ENCODE measurements at regions of chr6 and their contacts with region 1.

Region 1: DNA sequence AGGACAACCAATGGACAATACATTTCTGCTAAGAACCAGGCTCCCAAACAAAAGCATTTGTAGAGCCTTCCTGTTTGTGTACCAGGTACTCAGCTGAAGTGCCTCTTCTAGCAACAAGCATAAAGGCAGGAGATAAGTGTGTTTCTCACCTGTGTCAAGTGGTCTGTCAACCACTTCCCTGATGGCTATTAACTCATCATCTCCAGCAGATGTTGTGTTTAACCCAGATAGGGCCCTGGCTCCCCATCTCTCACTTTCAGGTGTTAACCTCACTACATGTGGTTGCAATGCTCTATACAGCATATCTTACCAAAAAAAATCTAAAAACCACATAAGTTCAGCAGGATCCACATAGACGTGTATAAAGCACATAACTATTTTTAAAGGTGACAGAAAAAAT is 9.6 kb upstream of the IL17A start:
- DNase-seq: peak in 1 of 2 donors; percentile 62
- ATAC-seq: peak; percentile 80 to 98 (median 86)
- H3K4me3 ChIP-seq: no peak overlapping the region
- H3K4me3 Mint-ChIP-seq: peak overlapping the region; percentile 1
- H3K27ac ChIP-seq: no peak overlapping the region
- H3K27ac Mint-ChIP-seq: peak overlapping the region in 1 of 2 donors; percentile 37
- H3K4me1 ChIP-seq: peaks cover 12% of the 10 kb centered on the region
- H3K4me1 Mint-ChIP-seq: peaks cover 28 to 31% of the 10 kb centered on the region in 2 donors
- H3K27me3 ChIP-seq: peaks cover 56% of the 10 kb centered on the region
- H3K27me3 Mint-ChIP-seq: peaks cover 12 to 75% of the 10 kb centered on the region in 2 donors
- CTCF ChIP-seq: no peak

Region 2: DNA sequence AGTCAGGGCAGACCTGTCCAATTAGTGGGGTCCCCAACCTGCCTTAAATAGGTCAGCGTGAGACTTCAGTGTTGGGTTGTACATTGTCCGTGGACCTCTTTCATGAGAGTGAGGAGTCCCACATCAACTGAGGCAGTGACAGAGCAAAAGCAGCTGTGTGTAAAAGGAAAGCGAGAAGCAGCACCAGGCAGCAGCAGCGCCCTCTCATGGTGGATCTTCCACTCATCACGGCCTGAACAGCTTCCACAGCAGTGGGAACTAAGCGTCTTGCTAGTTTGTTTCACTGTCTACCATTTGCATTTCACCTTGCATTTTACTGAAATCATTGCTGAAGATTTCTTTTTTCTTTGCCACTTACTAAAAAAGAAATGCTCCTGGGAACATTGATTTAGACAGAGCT is 422.9 kb before region 1 on chr6:
- intact Hi-C with region 1: no loop called
- DNase-seq: no peak
- ATAC-seq: no peak
- H3K4me3 ChIP-seq: no peak overlapping the region
- H3K4me3 Mint-ChIP-seq: no peak overlapping the region
- H3K27ac ChIP-seq: no peak overlapping the region
- H3K27ac Mint-ChIP-seq: no peak overlapping the region
- H3K4me1 ChIP-seq: no peaks in the 10 kb centered on the region
- H3K4me1 Mint-ChIP-seq: no peaks in the 10 kb centered on the region
- H3K27me3 ChIP-seq: no peaks in the 10 kb centered on the region
- H3K27me3 Mint-ChIP-seq: no peaks in the 10 kb centered on the region
- CTCF ChIP-seq: no peak

Region 3: DNA sequence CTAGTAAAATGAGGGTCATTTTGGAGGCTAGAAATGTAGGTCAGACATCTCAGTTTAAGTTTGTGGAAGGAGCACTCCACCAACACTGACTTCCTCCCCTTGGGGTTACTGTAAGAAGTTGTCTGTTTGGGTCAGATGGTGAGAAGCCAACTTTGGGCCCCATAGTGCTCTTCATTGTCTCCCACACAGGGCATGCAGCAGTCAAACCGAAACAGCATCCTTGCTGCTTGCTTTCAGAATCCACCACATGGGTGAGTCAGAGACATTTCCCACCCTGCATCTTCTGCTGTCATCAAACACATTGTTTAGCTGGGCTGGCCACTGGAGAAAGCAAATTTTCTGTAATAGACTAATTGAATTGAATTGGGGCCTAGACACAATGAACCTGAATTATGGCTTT is 50.9 kb after region 1 on chr6:
- intact Hi-C with region 1: loop called (anchors 5 kb)
- DNase-seq: peak in 1 of 2 donors; percentile 6
- ATAC-seq: peak in 2 of 3 donors; percentile 56 to 64
- H3K4me3 ChIP-seq: no peak overlapping the region
- H3K4me3 Mint-ChIP-seq: no peak overlapping the region
- H3K27ac ChIP-seq: no peak overlapping the region
- H3K27ac Mint-ChIP-seq: no peak overlapping the region
- H3K4me1 ChIP-seq: peaks cover 5% of the 10 kb centered on the region
- H3K4me1 Mint-ChIP-seq: peaks cover 6 to 8% of the 10 kb centered on the region in 2 donors
- H3K27me3 ChIP-seq: peaks cover 48% of the 10 kb centered on the region
- H3K27me3 Mint-ChIP-seq: peaks cover 45 to 70% of the 10 kb centered on the region in 2 donors
- CTCF ChIP-seq: no peak

Region 4: GRCh38 chr6:52399511-52400312 is 223.2 kb after region 1 on chr6:
- intact Hi-C with region 1: loop called (anchors 10 kb)
- DNase-seq: peak in 1 of 2 donors; percentile 77
- ATAC-seq: peak in 2 of 3 donors; percentile 65 to 75
- H3K4me3 ChIP-seq: no peak overlapping the region
- H3K4me3 Mint-ChIP-seq: peak overlapping the region; percentile 61
- H3K27ac ChIP-seq: no peak overlapping the region
- H3K27ac Mint-ChIP-seq: peak overlapping the region; percentile 21 to 84
- H3K4me1 ChIP-seq: peaks cover 25% of the 10 kb centered on the region
- H3K4me1 Mint-ChIP-seq: peaks cover 38 to 43% of the 10 kb centered on the region in 2 donors
- H3K27me3 ChIP-seq: no peaks in the 10 kb centered on the region
- H3K27me3 Mint-ChIP-seq: no peaks in the 10 kb centered on the region
- CTCF ChIP-seq: peak; percentile 80